Heart right ventricle (tissue), 16 donors: ENCODE measurements at regions of chr5 and their contacts with region 1.

Region 1: GRCh38 chr5:35182541-35183535 is 47.4 kb downstream of the PRLR start:
- DNase-seq: no peak
- ATAC-seq: peak in 3 of 8 donors; percentile 18 to 38 (median 35)
- H3K4me3 ChIP-seq: no peak overlapping the region
- H3K27ac ChIP-seq: no peak overlapping the region
- H3K4me1 ChIP-seq: no peaks in the 10 kb centered on the region
- H3K27me3 ChIP-seq: peaks cover 0 to 6% (median 3%) of the 10 kb centered on the region in 7 donors
- CTCF ChIP-seq: peak in 8 of 9 donors; percentile 30 to 60 (median 48)

Region 2: GRCh38 chr5:34957857-34958690 is 224.8 kb before region 1 on chr5:
- intact Hi-C with region 1: loop called in 1 of 10 experiments (anchors 5 kb)
- DNase-seq: no peak
- ATAC-seq: peak in 2 of 8 donors; percentile 37 to 49
- H3K4me3 ChIP-seq: no peak overlapping the region
- H3K27ac ChIP-seq: no peak overlapping the region
- H3K4me1 ChIP-seq: no peaks in the 10 kb centered on the region
- H3K27me3 ChIP-seq: no peaks in the 10 kb centered on the region
- CTCF ChIP-seq: peak in 8 of 9 donors; percentile 14 to 65 (median 50)

Region 3: DNA sequence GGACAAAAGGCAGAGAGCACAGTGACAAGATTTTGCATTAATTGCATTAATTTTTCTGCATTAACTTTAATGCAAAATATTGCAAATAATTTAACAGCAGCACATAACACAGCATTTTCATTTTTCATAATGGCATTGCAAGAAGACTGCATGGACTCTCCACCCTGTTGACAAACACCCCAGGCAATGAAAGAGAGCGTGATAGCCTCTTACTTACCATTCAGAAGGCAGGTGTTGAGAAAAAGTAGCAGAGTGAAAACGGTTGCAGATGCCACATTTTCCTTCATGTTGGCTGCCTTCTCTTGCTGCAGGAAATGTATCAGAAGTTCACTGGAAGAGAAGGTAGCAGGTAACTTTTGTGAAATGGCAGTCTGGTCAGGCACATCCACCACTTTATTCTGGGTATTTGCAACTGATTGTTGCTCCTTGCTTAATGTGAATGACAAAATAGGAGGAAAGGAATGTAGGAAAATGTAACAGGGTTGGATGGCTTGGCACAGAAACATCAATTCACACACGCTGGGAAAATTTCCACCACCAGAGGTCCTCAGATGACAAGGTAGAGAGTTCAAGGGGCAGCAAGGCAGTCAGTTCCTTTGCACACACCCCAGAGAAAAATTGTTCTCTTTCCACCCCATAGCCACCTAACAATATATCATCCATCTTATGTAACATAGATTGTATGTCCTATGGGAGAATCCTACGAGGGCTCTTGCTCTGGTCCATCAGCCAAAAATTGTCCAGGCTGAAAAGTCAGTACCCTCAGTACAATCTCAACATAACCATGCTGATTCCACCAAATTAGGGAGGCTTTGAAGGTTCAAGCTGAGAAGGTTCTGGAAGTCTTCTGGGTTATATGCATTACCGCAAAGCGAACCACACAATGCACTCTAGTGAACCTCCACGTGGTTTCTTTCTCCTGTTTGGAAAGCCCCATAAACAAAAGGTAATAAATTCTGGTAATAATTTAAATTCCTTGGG is 93.2 kb before region 1 on chr5:
- intact Hi-C with region 1: loop called in 4 of 10 experiments (anchors 5 to 10 kb)
- DNase-seq: peak in 1 of 2 donors; percentile 23
- ATAC-seq: no peak
- H3K4me3 ChIP-seq: no peak overlapping the region
- H3K27ac ChIP-seq: no peak overlapping the region
- H3K4me1 ChIP-seq: no peaks in the 10 kb centered on the region
- H3K27me3 ChIP-seq: no peaks in the 10 kb centered on the region
- CTCF ChIP-seq: peak; percentile 30 to 72 (median 63)

Region 4: GRCh38 chr5:35707659-35708058 is 524.8 kb after region 1 on chr5:
- intact Hi-C with region 1: no loop called
- DNase-seq: no peak
- ATAC-seq: no peak
- H3K4me3 ChIP-seq: no peak overlapping the region
- H3K27ac ChIP-seq: no peak overlapping the region
- H3K4me1 ChIP-seq: no peaks in the 10 kb centered on the region
- H3K27me3 ChIP-seq: no peaks in the 10 kb centered on the region
- CTCF ChIP-seq: no peak